ENCODE measurements at regions of chr4 and their contacts with region 1.

Region 1: GRCh38 chr4:165537028-165537648 is 158.3 kb downstream of the CPE start:
- DNase-seq: peak; percentile 35
- ATAC-seq: no peak
- H3K4me3 ChIP-seq: no peak overlapping the region
- H3K4me3 Mint-ChIP-seq: no peak overlapping the region
- H3K27ac ChIP-seq: no peak overlapping the region
- H3K27ac Mint-ChIP-seq: no peak overlapping the region
- H3K4me1 ChIP-seq: no peaks in the 10 kb centered on the region
- H3K4me1 Mint-ChIP-seq: no peaks in the 10 kb centered on the region
- H3K27me3 ChIP-seq: no peaks in the 10 kb centered on the region
- H3K27me3 Mint-ChIP-seq: peaks cover 6% of the 10 kb centered on the region
- CTCF ChIP-seq: peak; percentile 90

Region 2: GRCh38 chr4:164239976-164240375 is 1297.2 kb before region 1 on chr4:
- CTCF ChIA-PET with region 1: no interaction called
- POLR2A ChIA-PET with region 1: no interaction called
- intact Hi-C with region 1: no loop called
- DNase-seq: no peak
- ATAC-seq: no peak
- H3K4me3 ChIP-seq: no peak overlapping the region
- H3K4me3 Mint-ChIP-seq: no peak overlapping the region
- H3K27ac ChIP-seq: no peak overlapping the region
- H3K27ac Mint-ChIP-seq: no peak overlapping the region
- H3K4me1 ChIP-seq: no peaks in the 10 kb centered on the region
- H3K4me1 Mint-ChIP-seq: no peaks in the 10 kb centered on the region
- H3K27me3 ChIP-seq: no peaks in the 10 kb centered on the region
- H3K27me3 Mint-ChIP-seq: no peaks in the 10 kb centered on the region
- CTCF ChIP-seq: no peak

Region 3: DNA sequence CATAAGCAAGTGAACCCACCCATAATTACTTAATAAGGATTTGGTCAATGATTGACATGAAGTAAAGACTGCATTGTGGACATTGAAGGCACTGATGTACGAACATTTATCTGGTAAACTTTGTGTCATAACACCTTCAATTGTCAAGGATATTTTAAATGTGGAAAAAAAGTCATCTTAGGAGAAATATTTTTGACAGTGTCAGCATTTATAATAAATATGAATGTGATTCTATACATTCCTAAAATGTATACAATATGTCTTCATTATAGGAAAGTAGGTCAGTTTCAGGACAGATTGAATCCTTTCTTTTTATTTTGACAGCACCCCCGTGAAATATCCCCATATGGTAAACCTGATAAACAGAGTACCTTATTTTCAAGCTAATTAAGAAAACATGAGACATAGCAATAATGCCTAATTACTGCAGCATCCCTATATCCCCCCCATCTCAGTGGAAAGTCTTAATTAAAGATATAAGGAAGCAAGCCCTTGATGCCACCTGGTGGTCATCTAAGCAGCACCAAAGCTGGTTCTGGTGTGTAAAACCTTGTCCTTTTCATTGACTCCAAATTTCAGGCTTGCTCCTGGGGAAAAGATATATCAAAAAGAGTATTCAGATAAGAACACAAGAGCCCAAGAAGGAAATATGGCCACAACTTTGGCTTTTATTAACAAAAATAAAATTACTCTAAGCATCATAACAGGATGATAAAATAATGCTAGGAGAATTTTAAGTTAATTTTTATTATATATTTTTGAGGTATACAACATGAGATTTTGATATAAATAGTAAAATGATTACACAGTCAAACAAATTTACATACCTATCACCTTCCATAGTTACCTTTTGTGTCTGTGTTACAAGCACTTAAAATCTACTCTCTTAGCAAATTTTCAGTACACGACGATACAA is 715.6 kb after region 1 on chr4:
- CTCF ChIA-PET with region 1: no interaction called
- POLR2A ChIA-PET with region 1: no interaction called
- intact Hi-C with region 1: loop called (anchors 5 kb)
- DNase-seq: peak; percentile 3
- ATAC-seq: no peak
- H3K4me3 ChIP-seq: no peak overlapping the region
- H3K4me3 Mint-ChIP-seq: no peak overlapping the region
- H3K27ac ChIP-seq: no peak overlapping the region
- H3K27ac Mint-ChIP-seq: no peak overlapping the region
- H3K4me1 ChIP-seq: no peaks in the 10 kb centered on the region
- H3K4me1 Mint-ChIP-seq: no peaks in the 10 kb centered on the region
- H3K27me3 ChIP-seq: no peaks in the 10 kb centered on the region
- H3K27me3 Mint-ChIP-seq: no peaks in the 10 kb centered on the region
- CTCF ChIP-seq: no peak